Tibial artery (tissue), 4 donors: ENCODE measurements at regions of chr22 and their contacts with region 1.

Region 1: GRCh38 chr22:42169055-42169469 is 38.5 kb upstream of the CYP2D6 start:
- DNase-seq: peak in 1 of 2 donors; percentile 65
- H3K4me3 ChIP-seq: no peak overlapping the region
- H3K27ac ChIP-seq: no peak overlapping the region
- H3K4me1 ChIP-seq: peaks cover 0 to 18% (median 10%) of the 10 kb centered on the region in 4 donors
- H3K27me3 ChIP-seq: no peaks in the 10 kb centered on the region
- CTCF ChIP-seq: peak; percentile 75 to 79

Region 2: GRCh38 chr22:42437488-42438292 is 268.6 kb after region 1 on chr22:
- intact Hi-C with region 1: loop called (anchors 5 kb)
- DNase-seq: peak; percentile 55 to 85
- H3K4me3 ChIP-seq: peak overlapping the region; percentile 19 to 43
- H3K27ac ChIP-seq: no peak overlapping the region
- H3K4me1 ChIP-seq: peaks cover 0 to 26% (median 13%) of the 10 kb centered on the region in 4 donors
- H3K27me3 ChIP-seq: peaks cover 0 to 67% of the 10 kb centered on the region in 2 donors
- CTCF ChIP-seq: peak; percentile 94 to 97